ENCODE measurements at regions of chr17 and their contacts with region 1.

Region 1: DNA sequence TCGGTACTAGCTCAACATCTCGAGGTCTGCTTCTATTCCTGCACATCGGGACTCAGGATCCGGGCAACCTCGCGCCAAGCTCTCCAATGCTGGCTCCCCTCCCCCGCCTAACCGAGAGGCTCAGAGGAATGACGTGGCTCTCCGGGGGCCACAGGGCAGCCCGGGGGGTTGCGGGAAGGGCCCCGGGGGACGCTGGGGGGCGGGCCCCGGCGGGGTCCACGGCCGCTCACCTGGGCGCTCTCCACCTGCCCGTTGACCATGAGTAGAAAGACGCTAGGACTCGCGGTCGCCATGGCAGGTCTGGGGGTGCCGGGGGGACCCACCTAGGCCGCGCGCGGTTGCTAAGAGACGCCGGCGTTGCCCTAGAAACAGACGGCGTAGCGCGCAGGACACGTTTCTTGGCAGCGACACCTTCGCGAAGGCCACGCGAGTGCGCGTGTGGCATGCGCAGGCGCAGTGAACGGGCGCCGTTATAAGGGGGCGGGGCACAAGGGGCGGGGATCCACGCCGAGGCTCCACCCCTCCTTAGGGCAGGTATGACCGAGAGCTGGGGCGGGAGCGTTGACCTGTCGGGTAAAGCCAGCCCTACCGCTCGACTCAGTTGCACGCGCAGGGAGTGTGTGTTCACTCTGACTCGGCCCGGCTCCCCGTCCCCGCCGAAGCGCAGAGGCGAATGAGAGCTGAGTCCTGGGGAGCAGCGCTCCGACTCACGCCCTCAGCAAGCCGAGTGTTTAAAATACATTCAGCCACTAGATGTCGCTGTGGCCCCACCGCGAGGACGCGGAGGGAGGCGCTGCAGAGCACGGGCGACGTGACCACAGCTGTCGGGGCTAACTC is at the start of gene B9D1:
- DNase-seq: peak; percentile 89
- H3K4me3 ChIP-seq: peak within 1 kb of the TSS; percentile 74
- H3K27ac ChIP-seq: peak within 1 kb of the TSS; percentile 7
- H3K4me1 ChIP-seq: peaks cover 16% of the 10 kb centered on the region
- CTCF ChIP-seq: peak; percentile 97
- total RNA-seq, gene B9D1: 35.8 and 38.1 TPM in 2 replicates

Region 2: DNA sequence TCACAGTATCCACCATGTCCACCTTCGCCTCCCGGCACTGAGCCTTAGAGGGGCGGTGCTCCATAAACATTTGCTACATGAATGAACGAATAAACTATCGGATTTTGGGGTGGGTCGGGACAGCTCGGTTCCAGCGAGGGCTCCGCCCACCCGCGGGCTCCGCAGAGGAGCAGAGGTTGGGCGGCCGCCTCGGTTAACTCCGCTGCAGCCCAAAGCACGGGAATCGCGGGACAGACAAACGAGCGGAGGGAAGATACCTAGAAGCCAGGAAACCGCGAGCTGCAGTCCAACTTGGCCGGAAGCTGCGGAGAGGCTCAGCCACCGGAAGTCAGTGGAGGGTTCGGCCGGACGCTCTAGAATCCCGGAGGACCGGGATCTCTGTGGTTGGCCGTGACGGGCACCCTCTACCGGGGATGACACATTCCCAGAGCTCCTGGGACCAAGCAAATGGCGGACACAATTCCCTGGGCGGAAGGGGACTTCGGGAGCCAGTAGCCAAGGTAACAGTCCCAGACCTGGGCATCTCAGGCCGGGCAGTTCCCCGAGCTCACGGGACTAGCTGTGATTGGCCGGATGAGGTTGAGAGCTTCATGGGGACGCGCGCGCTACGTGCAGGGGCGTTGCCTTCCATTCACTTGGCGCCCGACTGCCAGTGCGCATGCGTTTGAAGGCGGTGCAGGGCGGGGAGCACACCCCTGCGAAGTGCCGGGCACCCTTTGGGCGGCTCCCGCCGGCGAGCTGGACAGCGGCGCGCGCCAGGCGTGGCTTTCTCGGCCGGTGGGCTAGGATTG is 15.3 kb after region 1 on chr17:
- CTCF ChIA-PET with region 1: interaction called, 9 read pairs
- POLR2A ChIA-PET with region 1: interaction called, 13 read pairs
- intact Hi-C with region 1: no loop called
- DNase-seq: peak; percentile 98
- H3K4me3 ChIP-seq: peak overlapping the region; percentile 84
- H3K27ac ChIP-seq: peak overlapping the region; percentile 70
- H3K4me1 ChIP-seq: peaks cover 22% of the 10 kb centered on the region
- CTCF ChIP-seq: no peak

Region 3: DNA sequence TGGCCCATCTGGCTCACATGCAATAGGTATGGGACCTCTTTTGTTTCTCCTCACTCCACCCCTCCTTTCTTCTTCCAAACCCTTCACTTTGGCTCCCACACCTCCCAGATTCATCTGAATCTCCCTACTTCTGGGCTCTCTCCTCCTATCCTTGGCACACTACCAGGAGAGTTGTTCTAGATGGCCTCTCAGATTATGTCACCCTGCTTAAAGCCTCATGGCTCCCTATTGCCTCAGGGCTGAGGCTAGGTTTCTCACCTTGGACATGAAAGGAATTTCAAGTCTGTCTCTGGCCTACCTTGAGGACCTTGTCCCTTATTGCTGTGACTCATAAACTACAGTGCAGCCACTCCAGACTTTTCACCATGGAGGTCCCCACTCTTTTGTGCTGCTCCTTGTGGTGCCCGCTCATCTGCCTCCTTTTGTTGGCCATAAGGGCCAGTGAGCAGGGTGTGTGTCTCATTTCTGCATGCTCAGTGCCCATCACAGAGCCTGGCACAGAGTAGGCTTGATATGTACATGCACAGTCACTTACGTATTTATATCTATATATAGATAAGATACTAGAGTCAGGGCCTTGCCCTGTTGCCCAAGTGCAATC is 25.5 kb after region 1 on chr17:
- CTCF ChIA-PET with region 1: no interaction called
- POLR2A ChIA-PET with region 1: no interaction called
- intact Hi-C with region 1: no loop called
- DNase-seq: no peak
- H3K4me3 ChIP-seq: no peak overlapping the region
- H3K27ac ChIP-seq: no peak overlapping the region
- H3K4me1 ChIP-seq: peaks cover 11% of the 10 kb centered on the region
- CTCF ChIP-seq: no peak

Region 4: DNA sequence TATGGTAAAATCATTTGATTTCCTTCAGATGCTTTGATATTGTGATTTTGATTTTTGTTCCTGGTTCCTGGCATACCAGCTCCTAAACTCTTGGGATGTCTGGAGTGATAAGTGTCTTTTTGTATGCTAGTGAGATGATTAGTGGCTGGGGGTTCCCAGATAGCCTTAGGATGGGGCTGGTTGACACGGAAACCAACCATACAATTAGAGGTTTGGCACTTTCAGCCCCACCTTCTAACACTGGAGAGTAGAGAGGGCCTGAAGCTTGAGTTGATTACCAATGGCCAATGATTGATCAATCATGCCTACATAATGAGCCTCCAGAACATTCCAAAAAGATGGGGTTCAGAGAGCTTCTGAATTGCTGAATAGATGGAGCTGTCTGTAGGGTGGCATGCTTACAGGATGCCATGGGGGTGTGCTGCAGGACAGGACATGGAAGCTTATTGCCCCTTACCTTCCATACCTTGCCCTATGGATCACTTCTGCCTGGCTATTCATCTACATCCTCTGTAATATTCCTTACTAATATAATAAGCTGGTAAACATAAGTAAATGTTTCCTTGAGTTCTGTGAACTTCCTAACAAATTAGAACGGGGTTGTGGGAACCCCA is 71.3 kb after region 1 on chr17:
- CTCF ChIA-PET with region 1: interaction called, 3 read pairs
- POLR2A ChIA-PET with region 1: no interaction called
- intact Hi-C with region 1: loop called (anchors 2 kb)
- DNase-seq: peak; percentile 29
- H3K4me3 ChIP-seq: no peak overlapping the region
- H3K27ac ChIP-seq: no peak overlapping the region
- H3K4me1 ChIP-seq: peaks cover 22% of the 10 kb centered on the region
- CTCF ChIP-seq: peak; percentile 56

Region 5: DNA sequence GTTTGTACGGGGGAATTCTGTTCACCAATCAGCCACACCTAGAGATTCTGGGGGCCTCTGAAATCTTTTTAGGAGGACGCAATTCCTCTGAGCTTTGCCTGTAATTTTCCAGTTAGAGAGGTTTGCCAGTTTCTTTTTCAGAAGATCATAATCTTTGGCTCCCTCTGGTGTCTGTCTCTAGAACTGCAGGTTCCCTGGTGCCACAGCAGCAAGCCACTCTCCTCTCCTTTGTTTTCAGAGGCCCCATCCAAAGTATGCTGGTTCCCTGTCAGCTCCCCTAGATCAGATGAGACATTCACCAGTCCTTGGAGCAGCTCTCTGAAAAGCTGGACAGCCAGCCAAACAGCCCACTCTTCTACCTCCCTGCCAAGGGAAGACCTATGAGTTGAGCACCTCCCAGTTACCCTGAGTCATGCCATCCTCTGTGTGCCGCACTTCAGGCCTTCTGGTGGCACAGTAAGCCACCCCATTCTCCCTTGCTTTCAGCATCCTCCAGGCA is 84.6 kb after region 1 on chr17:
- CTCF ChIA-PET with region 1: no interaction called
- POLR2A ChIA-PET with region 1: no interaction called
- intact Hi-C with region 1: loop called (anchors 1 kb)
- DNase-seq: peak; percentile 75
- H3K4me3 ChIP-seq: no peak overlapping the region
- H3K27ac ChIP-seq: no peak overlapping the region
- H3K4me1 ChIP-seq: no peaks in the 10 kb centered on the region
- CTCF ChIP-seq: peak; percentile 96

Region 6: GRCh38 chr17:19464031-19465026 is 101.8 kb after region 1 on chr17:
- CTCF ChIA-PET with region 1: no interaction called
- POLR2A ChIA-PET with region 1: no interaction called
- intact Hi-C with region 1: loop called (anchors 5 kb)
- DNase-seq: peak; percentile 43
- H3K4me3 ChIP-seq: peak overlapping the region; percentile 44
- H3K27ac ChIP-seq: peak overlapping the region; percentile 92
- H3K4me1 ChIP-seq: peaks cover 79% of the 10 kb centered on the region
- CTCF ChIP-seq: no peak

Region 7: DNA sequence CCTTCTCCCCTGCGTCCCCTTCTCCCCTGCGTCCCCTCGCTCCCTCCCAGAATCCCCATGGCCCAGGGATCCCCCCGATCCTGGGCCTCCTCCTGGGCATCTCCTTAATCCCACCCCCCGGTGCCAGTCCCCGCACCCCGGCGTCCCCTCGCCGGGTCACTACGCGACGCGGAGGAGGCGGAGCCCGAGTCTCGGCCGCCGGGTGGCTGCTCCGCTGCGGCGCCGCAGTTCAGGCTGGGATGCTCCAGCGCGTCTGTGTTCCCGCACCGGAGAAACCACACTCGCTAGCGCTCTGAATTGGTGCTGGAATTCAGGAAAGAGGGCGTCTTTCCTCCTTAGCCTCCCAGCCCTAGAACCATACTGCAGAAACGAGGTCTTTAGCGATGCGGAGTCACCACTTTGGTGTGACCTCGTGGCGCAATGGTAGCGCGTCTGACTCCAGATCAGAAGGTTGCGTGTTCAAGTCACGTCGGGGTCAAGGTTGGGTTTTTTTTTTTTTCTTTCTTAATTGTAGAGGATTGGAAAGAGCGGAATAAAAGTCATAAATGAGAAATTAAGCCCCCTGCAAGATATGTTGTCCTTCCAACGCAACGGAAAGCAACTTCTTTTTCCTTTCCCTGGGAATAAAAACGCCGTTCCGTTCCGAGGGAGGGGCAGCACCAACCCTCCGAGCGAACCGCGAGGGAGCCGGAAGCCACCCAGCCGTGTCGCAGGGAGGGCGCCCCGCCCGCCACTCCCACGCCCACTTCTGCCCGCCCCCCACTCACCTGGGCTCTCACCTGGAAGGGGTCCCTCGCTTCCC is 145.5 kb after region 1 on chr17:
- CTCF ChIA-PET with region 1: no interaction called
- POLR2A ChIA-PET with region 1: no interaction called
- intact Hi-C with region 1: loop called (anchors 5 kb)
- DNase-seq: peak; percentile 76
- H3K4me3 ChIP-seq: peak overlapping the region; percentile 82
- H3K27ac ChIP-seq: peak overlapping the region; percentile 68
- H3K4me1 ChIP-seq: peaks cover 37% of the 10 kb centered on the region
- CTCF ChIP-seq: no peak

Region 8: DNA sequence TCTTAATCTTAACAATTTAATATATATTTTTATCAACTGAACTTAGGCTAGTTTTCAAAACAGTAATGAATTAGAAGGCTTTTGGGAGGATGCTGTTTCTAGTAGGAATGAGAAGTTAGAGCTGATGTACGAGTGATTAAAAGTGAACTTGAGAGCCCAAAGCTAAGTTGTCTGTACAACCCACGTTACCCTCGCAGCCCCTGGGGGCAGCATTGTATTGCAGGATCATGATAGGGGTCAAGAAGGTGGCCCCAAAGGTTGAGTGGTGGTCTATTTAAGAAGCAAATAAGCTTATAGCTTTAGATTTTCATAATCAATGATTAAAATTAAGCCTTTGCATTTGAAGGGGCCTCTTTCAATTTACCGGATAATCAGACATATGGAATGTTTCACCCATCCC is 252.4 kb after region 1 on chr17:
- CTCF ChIA-PET with region 1: no interaction called
- POLR2A ChIA-PET with region 1: no interaction called
- intact Hi-C with region 1: no loop called
- DNase-seq: peak; percentile 10
- H3K4me3 ChIP-seq: no peak overlapping the region
- H3K27ac ChIP-seq: no peak overlapping the region
- H3K4me1 ChIP-seq: no peaks in the 10 kb centered on the region
- CTCF ChIP-seq: peak; percentile 62

Region 9: GRCh38 chr17:19766422-19767270 is 404.2 kb after region 1 on chr17:
- CTCF ChIA-PET with region 1: no interaction called
- POLR2A ChIA-PET with region 1: no interaction called
- intact Hi-C with region 1: loop called (anchors 1 kb)
- DNase-seq: peak; percentile 80
- H3K4me3 ChIP-seq: no peak overlapping the region
- H3K27ac ChIP-seq: no peak overlapping the region
- H3K4me1 ChIP-seq: peaks cover 24% of the 10 kb centered on the region
- CTCF ChIP-seq: peak; percentile 97

Measured in OCI-LY7 (cell line).